AG04449 (cell line): ENCODE measurements at regions of chr21 and their contacts with region 1.

Region 1: DNA sequence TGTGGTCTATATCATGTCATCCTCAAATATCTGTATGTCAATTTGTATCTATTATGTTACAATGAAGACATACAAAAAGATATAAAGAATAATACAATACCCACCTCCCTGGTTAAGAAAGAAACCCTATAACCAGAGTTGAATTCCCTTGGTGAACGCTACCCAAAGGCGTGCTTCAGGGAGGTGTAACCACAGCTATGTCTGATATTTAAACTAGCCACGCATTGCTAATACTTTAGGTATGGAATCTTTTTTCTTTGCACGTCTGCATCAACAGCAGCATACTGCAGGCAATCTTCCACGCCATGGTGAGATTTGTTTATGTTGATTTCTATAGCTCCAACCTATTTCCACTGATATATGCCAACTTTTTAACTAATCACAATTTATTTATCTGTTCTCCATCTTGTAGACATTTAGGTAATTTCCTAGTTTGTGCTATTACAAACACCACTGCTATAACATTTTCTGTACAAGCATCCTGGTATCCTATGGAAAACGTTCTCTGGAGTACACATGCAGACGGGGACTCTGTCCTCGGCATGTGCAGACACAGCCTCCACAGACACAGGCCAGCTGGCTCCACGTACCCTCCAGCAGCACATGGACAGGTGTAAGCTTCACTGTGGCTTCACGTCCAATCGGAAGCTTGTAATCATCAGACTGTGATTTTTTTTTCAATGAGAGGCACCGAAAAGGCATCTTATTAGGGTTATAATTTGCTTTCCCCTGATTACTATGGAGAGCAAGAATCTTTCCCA is 58.5 kb downstream of the HSF2BP start:
- DNase-seq: peak; percentile 83
- H3K4me3 ChIP-seq: no peak overlapping the region; the same call in none of the 2 replicates
- CTCF ChIP-seq: no peak

Region 2: DNA sequence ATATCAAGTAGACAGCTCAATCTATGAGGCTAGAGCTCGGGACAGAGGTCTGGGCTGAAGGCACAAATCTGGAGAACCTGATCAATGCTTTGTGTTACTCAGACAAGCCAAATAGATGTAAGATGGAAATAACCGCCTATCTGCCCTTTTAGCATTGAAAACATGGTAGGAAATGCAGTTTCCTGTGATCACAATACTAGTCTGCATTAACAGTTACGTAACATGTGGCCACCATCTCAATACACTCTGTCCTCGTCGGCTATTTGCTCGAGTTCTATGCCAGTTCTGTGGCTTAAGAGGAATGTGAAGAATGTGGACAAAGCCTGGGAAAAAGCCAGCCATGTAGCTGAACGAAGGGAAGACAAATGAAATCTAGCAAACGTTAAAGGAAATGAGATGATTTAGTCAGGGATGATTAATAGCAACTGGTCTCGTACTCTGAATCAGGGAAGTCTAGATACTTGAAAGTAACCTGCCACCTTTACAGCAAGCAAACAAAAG is 14.8 kb before region 1 on chr21:
- CTCF ChIA-PET with region 1: interaction called, 15 read pairs
- POLR2A ChIA-PET with region 1: interaction called, 8 read pairs
- DNase-seq: peak; percentile 98
- H3K4me3 ChIP-seq: no peak overlapping the region
- CTCF ChIP-seq: no peak

Region 3: GRCh38 chr21:43611598-43612369 is 11.0 kb after region 1 on chr21:
- CTCF ChIA-PET with region 1: interaction called, 28 read pairs
- POLR2A ChIA-PET with region 1: interaction called, 3 read pairs
- DNase-seq: no peak
- H3K4me3 ChIP-seq: no peak overlapping the region
- CTCF ChIP-seq: peak; percentile 74

Region 4: GRCh38 chr21:44043613-44044012 is 442.8 kb after region 1 on chr21:
- CTCF ChIA-PET with region 1: no interaction called
- POLR2A ChIA-PET with region 1: no interaction called
- DNase-seq: no peak
- H3K4me3 ChIP-seq: no peak overlapping the region
- CTCF ChIP-seq: no peak